ENCODE measurements at regions of chr15 and their contacts with region 1.

Region 1: DNA sequence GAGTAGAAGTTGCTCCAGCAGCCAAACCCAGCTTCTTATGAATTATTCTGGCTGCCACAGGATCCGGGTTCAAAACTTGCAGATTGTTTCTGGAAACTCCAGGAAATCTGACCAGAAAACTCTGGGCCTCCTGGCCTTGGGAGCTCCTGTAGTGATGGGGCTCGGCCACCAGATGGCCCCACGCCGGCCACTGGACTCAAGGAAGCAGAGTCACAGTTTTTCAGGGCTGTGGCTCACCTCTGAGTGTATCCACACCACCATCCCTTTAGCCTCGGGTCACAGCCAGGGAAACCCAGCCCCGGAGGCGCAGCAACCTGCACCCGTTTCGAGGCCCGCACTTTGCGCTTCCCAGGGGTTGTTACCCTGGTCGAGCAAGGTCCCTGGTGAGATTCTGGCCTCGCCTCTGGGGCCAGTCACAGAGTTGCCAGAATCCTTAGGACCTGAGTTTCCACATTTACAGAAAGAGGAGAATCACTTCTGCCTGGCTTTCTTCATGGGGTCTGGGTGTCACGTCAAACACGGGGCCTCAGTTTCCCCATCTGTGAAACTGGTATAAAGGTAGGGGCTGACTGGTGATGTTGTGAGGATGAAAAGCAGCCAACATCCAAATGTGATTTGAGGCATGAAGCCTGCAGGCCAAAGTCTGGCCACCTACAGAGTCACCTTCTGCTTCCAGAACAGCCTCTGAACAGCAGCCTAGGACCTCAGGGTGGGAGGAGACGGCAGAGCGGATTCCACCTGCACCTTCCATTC is 53.5 kb upstream of the LCTL start:
- H3K4me3 ChIP-seq: no peak overlapping the region
- H3K27ac ChIP-seq: no peak overlapping the region
- H3K4me1 ChIP-seq: no peaks in the 10 kb centered on the region
- CTCF ChIP-seq: peak; percentile 75

Region 2: DNA sequence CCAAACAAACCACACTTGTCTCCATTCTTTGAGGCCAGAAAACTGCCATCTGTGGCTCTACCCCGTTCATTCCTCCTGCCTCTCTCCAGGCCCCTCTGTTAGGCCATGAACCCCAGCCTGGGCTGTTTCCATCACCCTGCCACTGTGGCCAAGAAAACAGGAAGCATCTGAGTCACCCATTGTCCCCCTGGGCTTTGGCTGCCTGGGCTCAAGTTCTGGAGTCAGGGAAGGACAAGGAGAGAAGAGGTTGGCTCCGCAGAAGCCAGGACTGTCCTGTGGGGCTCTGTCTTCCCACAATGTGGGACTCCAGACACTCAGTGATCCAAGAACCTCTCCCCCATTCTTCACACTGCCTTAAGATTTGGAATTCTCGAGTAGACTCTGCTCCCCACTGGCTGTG is 38.7 kb before region 1 on chr15:
- CTCF ChIA-PET with region 1: no interaction called
- POLR2A ChIA-PET with region 1: no interaction called
- H3K4me3 ChIP-seq: no peak overlapping the region
- H3K27ac ChIP-seq: no peak overlapping the region
- H3K4me1 ChIP-seq: no peaks in the 10 kb centered on the region
- CTCF ChIP-seq: no peak

Region 3: GRCh38 chr15:66603301-66604179 is 15.8 kb before region 1 on chr15:
- CTCF ChIA-PET with region 1: interaction called, 39 read pairs
- POLR2A ChIA-PET with region 1: no interaction called
- H3K4me3 ChIP-seq: no peak overlapping the region
- H3K27ac ChIP-seq: no peak overlapping the region
- H3K4me1 ChIP-seq: no peaks in the 10 kb centered on the region
- CTCF ChIP-seq: peak; percentile 75

Region 4: DNA sequence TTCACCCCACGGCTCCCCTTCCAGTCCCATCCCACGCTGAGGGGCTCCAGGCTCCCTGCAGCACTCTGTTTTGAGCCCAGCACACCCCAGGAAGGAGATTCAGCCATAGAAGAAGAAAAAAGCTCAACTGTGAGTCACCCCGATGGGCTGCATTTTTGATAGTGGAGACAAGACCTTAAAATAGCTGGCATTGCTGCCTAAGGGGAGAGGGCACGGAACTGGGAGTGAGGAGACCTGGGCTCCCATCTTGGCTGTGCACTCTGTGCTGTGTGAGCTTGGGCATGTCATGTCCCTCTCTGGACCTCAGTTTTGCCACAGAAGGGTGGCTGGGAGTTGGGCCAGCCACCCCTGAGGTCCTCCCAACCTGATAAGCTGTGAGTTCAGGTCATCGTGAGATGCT is 25.5 kb after region 1 on chr15:
- CTCF ChIA-PET with region 1: interaction called, 11 read pairs
- POLR2A ChIA-PET with region 1: no interaction called
- H3K4me3 ChIP-seq: no peak overlapping the region
- H3K27ac ChIP-seq: no peak overlapping the region
- H3K4me1 ChIP-seq: no peaks in the 10 kb centered on the region; the same call in 1 of the 2 replicates
- CTCF ChIP-seq: no peak

Region 5: DNA sequence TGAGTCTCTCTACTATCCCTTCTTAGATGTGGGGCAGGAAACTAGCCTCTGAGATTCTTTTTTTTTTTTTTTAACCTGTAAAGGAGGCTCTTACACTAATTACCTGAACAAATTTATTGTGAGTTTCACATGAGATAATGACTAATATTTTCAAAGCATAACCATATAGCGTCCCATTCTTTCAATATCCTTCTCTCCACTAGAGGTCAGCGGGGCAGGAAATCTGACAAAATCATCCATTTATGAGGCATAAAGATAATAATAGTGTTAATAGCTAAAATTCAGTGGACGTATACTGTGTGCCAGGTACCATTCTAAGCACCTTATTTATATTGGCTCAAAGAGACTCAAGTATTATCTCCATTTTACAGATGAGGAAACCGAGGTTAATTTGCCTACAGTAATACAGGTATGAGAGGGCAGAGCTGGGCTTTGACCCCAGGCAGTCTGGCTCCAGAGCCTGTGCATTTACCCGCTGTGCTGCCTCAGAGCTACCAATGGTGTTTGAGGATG is 66.4 kb after region 1 on chr15:
- CTCF ChIA-PET with region 1: interaction called, 13 read pairs
- POLR2A ChIA-PET with region 1: no interaction called
- H3K4me3 ChIP-seq: no peak overlapping the region
- H3K27ac ChIP-seq: no peak overlapping the region
- H3K4me1 ChIP-seq: no peaks in the 10 kb centered on the region
- CTCF ChIP-seq: no peak

Region 6: DNA sequence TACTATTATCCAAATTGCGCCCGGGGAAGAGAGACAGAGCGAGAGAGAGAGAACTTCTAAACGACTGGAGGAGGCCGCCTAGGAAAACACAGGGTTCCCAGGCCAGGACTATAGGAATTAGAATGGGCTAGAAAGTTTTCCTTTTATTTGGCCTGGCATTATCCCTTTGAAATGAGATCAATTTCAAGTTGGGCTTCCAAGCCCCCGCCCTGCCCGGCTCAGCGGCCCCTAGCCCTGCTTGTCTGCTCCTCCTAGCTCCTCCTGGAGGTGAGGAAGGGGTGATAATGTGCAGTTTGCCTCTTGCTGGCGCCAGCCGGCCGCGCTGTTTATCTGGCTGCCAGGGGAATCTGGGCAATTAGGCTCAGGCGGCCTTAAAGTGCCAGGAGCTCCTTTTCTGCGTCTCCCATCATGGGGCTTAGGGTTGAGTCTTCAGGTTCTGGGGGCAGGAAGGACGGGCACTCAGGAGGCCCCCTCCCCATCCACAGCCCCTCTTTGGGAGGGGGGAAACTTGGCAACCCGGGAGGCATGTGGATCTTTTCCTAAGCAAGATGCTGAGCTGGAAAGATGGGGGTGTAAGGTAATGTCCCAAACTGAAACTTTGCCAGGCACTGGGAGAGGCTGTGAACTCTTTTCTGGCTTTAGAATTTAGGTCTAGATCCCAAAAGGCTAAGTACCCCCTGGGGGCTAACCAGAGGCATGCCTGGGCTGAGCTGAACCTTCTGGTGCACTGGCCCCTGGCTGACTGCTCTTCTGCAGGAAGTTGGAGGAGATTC is 88.2 kb after region 1 on chr15:
- CTCF ChIA-PET with region 1: interaction called, 15 read pairs
- POLR2A ChIA-PET with region 1: interaction called, 12 read pairs
- H3K4me3 ChIP-seq: no peak overlapping the region
- H3K27ac ChIP-seq: peak overlapping the region; percentile 27
- H3K4me1 ChIP-seq: peaks cover 32% of the 10 kb centered on the region
- CTCF ChIP-seq: peak; percentile 61; the same call in 1 of the 2 replicates

Region 7: GRCh38 chr15:66815322-66815721 is 196.0 kb after region 1 on chr15:
- CTCF ChIA-PET with region 1: no interaction called
- POLR2A ChIA-PET with region 1: no interaction called
- H3K4me3 ChIP-seq: no peak overlapping the region
- H3K27ac ChIP-seq: no peak overlapping the region
- H3K4me1 ChIP-seq: no peaks in the 10 kb centered on the region
- CTCF ChIP-seq: no peak